OCI-LY7 (cell line): ENCODE measurements at regions of chr10 and their contacts with region 1.

Region 1: DNA sequence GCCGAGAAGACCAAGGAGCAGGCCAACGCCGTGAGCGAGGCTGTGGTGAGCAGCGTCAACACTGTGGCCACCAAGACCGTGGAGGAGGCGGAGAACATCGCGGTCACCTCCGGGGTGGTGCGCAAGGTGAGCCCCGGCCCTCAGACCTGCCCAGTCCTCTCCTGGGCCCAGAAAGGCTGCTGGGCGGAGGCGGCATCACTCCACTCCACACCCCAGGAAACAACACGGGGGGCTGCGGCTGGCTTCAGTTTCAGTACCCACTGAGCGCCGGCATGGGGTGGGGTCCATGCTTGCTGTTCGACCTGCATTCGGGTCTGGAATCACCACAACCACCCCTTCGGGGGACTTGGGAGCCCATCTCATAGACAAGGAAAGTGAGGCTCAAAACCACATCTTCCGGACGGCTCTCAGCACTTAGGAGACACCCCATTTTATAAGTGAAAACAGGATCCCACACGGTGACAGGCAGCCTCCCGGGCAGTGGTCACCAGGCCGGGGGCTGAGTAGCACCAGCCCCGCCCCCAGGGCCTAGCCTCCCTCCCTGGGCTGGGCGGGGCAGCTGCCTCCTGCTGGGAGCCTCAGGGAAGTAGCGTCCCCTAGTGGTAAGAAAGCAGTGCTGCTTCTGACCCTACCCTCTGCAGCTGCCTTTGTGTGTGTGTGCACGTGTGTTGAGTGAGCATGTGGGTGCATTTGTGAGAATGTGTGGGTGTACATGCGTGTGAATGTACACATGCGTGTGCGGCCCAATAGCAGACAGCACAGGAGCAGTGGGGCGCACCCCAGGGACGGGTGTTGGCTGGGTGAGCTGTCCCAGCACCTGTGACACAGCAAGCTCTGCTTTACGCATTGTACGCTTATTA is 1.8 kb downstream of the SNCG start:
- DNase-seq: peak; percentile 66
- H3K4me3 ChIP-seq: no peak overlapping the region
- H3K27ac ChIP-seq: no peak overlapping the region
- H3K4me1 ChIP-seq: no peaks in the 10 kb centered on the region
- CTCF ChIP-seq: peak; percentile 81

Region 2: DNA sequence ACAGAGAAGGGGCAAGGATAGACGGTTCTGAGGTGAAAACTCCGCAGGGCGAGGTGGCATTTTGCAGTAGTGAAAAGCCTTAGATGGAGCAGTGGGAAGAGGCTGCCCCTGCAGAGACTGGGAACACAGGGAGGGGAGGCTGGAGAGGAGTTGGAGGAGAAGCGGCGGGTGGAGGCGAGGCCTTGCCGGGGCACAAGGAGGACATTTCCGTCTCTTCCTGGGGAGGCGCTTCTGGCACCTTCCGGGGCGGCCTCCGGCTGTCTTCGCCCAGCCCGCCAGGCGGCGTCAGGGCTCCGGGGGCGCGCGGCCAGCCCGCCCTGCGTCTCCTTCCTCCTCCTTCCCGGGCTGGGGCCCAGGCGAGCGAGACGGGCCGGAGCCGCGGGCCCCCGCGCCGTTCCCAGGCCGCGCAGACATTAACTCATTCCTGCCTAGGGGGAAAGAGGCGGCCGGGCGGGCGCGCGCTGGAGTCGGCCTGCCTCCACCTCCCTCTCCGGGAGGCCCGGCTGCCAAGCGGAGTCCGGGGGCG is 249.2 kb before region 1 on chr10:
- CTCF ChIA-PET with region 1: no interaction called
- POLR2A ChIA-PET with region 1: no interaction called
- intact Hi-C with region 1: loop called (anchors 10 kb)
- DNase-seq: peak; percentile 89
- H3K4me3 ChIP-seq: peak overlapping the region; percentile 70
- H3K27ac ChIP-seq: peak overlapping the region; percentile 38
- H3K4me1 ChIP-seq: peaks cover 14% of the 10 kb centered on the region
- CTCF ChIP-seq: peak; percentile 80